Right ventricle myocardium inferior (tissue), 1 donor: ENCODE measurements at regions of chr11 and their contacts with region 1.

Region 1: GRCh38 chr11:72222907-72223614 is 1.5 kb upstream of the INPPL1 start:
- DNase-seq: peak; percentile 97
- ATAC-seq: peak; percentile 91

Region 2: GRCh38 chr11:71928737-71929452 is 294.2 kb before region 1 on chr11 and contains the start of gene RNF121:
- intact Hi-C with region 1: loop called (anchors 5 kb)
- DNase-seq: peak; percentile 98
- ATAC-seq: peak; percentile 99
- total RNA-seq, gene RNF121: 23.0 TPM

Region 3: GRCh38 chr11:72102946-72103753 is 119.9 kb before region 1 on chr11 and contains the start of gene LAMTOR1:
- intact Hi-C with region 1: loop called (anchors 2 kb)
- DNase-seq: peak; percentile 100
- ATAC-seq: peak; percentile 99
- total RNA-seq, gene LAMTOR1: 80.3 TPM

Region 4: DNA sequence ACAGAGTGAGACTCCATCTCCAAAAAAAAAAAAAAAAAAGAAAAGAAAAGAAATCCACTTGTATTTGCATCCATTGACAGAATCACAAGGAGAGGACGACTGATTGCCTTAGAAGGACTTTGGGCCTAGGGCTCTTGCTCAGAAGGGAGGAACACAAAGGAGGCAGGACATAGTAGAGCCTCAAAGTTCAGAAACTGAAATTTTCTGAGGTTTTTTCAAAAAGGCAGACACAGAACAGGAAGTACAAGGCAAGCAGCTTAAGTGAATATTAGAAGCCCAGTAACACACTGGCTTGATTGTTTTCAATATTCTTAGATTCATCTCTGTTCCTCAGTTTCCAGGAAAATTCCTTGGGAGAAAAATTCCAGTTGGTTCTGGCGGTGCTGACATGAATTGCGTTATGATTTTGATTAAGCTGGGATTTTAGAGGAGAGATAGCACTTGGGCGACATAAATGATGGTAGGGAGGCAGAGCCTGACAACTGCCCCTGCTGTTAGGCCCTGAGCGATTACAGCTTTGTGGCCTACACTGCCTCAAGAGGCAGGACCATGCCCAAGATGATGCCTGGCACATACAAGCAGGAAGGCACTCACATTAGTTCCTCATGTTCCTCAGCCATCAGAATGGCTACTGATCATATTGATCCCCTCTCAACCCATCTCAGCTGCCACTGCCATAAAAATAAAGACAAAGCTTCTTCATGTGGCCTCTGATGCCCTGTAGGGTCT is 195.9 kb after region 1 on chr11:
- intact Hi-C with region 1: loop called (anchors 5 kb)
- DNase-seq: no peak
- ATAC-seq: no peak